B cell (primary cell): ENCODE measurements at regions of chr5 and their contacts with region 1.

Region 1: GRCh38 chr5:14142827-14143548 is at the start of gene TRIO:
- DNase-seq: peak; percentile 92
- ATAC-seq: peak; percentile 52
- H3K4me3 ChIP-seq: peak within 1 kb of the TSS; percentile 76 to 97 (median 93)
- H3K4me3 Mint-ChIP-seq: peak within 1 kb of the TSS; percentile 90
- H3K27ac ChIP-seq: peak within 1 kb of the TSS; percentile 92 to 95
- H3K27ac Mint-ChIP-seq: peak within 1 kb of the TSS; percentile 97
- H3K4me1 ChIP-seq: peaks cover 32 to 36% of the 10 kb centered on the region in 2 donors
- H3K4me1 Mint-ChIP-seq: peaks cover 33% of the 10 kb centered on the region
- H3K27me3 ChIP-seq: peaks cover 0 to 7% (median 1%) of the 10 kb centered on the region in 4 experiments
- H3K27me3 Mint-ChIP-seq: peaks cover 7% of the 10 kb centered on the region
- CTCF ChIP-seq: peak; percentile 75
- total RNA-seq, gene TRIO: 479 and 534 TPM in 2 replicates

Region 2: DNA sequence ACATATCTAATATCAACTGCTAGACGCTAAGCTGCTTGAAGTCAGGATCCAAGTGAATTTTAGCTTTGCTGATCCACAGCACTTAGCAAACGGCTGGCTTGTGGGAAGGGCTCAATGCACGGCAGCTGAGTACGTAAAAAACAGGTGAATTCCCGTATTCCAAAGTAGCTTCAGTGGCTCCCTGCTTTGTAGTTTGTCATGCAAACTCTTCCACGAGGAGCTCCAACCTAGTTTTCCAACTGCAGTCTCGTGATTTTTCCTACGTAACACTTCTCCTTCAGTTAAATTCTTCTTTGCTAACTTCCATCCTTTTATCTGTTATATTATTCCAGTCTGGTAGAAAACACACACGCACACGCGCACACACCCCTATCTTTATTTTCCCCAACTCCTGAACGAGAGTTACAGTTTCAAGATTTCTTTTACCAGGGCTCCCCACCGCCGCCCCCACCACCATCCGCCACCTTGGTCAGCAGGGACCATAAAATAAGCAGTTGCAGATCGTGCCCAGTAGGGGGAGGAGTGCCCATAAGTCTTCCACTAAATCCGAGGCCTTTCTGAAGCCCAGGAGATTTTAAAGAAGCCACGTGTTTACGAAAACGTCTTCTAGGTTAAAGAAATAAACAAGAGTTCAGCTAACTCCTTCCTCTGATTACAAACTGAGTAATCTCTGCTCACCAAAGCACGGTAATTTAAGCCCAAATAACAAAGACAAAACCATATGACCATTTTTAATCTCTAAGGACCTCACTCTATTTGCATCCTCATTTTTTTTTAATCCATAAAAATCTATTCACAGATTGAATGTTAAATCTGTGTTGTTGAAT is 34.6 kb before region 1 on chr5:
- CTCF ChIA-PET with region 1: interaction called, 11 read pairs
- POLR2A ChIA-PET with region 1: no interaction called
- intact Hi-C with region 1: loop called (anchors 2 kb)
- DNase-seq: peak; percentile 83
- ATAC-seq: peak; percentile 95
- H3K4me3 ChIP-seq: peak overlapping the region in 3 of 5 experiments; percentile 5 to 22 (median 17)
- H3K4me3 Mint-ChIP-seq: peak overlapping the region; percentile 77
- H3K27ac ChIP-seq: no peak overlapping the region
- H3K27ac Mint-ChIP-seq: peak overlapping the region; percentile 11
- H3K4me1 ChIP-seq: peaks cover 20 to 24% of the 10 kb centered on the region in 2 donors
- H3K4me1 Mint-ChIP-seq: peaks cover 39% of the 10 kb centered on the region
- H3K27me3 ChIP-seq: no peaks in the 10 kb centered on the region
- H3K27me3 Mint-ChIP-seq: no peaks in the 10 kb centered on the region
- CTCF ChIP-seq: peak; percentile 81

Region 3: GRCh38 chr5:14168144-14168792 is 25.3 kb after region 1 on chr5:
- CTCF ChIA-PET with region 1: interaction called, 4 read pairs
- POLR2A ChIA-PET with region 1: interaction called, 10 read pairs
- intact Hi-C with region 1: loop called (anchors 2 kb)
- DNase-seq: peak; percentile 67
- ATAC-seq: peak; percentile 62
- H3K4me3 ChIP-seq: peak overlapping the region; percentile 19 to 62 (median 54)
- H3K4me3 Mint-ChIP-seq: peak overlapping the region; percentile 85
- H3K27ac ChIP-seq: peak overlapping the region; percentile 65 to 83
- H3K27ac Mint-ChIP-seq: peak overlapping the region; percentile 90
- H3K4me1 ChIP-seq: peaks cover 64 to 65% of the 10 kb centered on the region in 2 donors
- H3K4me1 Mint-ChIP-seq: peaks cover 83% of the 10 kb centered on the region
- H3K27me3 ChIP-seq: no peaks in the 10 kb centered on the region
- H3K27me3 Mint-ChIP-seq: no peaks in the 10 kb centered on the region
- CTCF ChIP-seq: no peak

Region 4: DNA sequence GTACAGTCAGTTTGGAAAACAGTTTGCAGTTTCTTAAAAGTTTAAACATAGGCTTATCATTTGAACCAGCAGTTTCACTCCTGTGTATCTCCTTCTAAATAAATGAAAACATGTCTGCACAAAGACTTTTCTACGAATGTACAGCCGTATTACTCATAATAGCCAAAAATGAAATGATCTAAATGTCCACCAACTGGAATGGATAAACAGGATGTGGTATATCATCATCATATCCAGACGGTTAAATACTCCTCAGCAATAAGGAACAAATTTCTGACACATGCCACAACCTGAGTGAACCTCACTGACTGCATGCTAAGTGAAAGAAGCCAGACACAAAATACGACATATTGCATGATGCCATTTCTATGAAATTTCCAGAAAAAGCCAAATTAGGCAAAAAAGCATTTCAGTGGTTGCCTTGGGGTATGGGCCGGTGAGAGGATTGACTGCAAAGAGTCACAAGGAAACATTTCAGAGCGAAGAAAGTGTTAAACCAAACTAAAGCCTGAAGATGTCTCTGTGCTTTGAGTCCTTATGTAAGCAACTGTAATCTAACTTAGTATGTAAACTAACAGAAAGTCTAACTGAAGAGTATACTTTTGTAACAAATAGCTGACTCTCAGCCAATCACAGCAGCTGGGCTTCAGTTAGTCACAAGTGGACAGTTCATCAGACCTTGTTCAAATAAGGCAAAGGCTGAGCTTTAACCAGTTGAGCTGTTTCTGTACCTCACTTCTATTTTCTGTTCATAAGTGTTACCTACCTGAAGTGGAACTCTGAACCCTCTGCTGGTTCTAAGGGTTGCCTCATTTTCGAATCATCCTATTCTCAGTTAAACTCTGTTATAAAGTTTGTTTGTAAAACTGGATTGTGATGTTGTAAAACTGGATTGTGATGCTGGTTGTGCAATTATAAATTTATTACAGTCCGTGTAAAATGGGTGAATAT is 65.4 kb after region 1 on chr5:
- CTCF ChIA-PET with region 1: interaction called, 9 read pairs
- POLR2A ChIA-PET with region 1: interaction called, 12 read pairs
- intact Hi-C with region 1: loop called (anchors 1 kb)
- DNase-seq: peak; percentile 51
- ATAC-seq: peak; percentile 25
- H3K4me3 ChIP-seq: peak overlapping the region in 2 of 5 experiments; percentile 0 to 9
- H3K4me3 Mint-ChIP-seq: peak overlapping the region; percentile 74
- H3K27ac ChIP-seq: peak overlapping the region; percentile 80 to 94
- H3K27ac Mint-ChIP-seq: peak overlapping the region; percentile 93
- H3K4me1 ChIP-seq: peaks cover 84 to 88% of the 10 kb centered on the region in 2 donors
- H3K4me1 Mint-ChIP-seq: peaks cover 85% of the 10 kb centered on the region
- H3K27me3 ChIP-seq: no peaks in the 10 kb centered on the region
- H3K27me3 Mint-ChIP-seq: no peaks in the 10 kb centered on the region
- CTCF ChIP-seq: no peak

Region 5: DNA sequence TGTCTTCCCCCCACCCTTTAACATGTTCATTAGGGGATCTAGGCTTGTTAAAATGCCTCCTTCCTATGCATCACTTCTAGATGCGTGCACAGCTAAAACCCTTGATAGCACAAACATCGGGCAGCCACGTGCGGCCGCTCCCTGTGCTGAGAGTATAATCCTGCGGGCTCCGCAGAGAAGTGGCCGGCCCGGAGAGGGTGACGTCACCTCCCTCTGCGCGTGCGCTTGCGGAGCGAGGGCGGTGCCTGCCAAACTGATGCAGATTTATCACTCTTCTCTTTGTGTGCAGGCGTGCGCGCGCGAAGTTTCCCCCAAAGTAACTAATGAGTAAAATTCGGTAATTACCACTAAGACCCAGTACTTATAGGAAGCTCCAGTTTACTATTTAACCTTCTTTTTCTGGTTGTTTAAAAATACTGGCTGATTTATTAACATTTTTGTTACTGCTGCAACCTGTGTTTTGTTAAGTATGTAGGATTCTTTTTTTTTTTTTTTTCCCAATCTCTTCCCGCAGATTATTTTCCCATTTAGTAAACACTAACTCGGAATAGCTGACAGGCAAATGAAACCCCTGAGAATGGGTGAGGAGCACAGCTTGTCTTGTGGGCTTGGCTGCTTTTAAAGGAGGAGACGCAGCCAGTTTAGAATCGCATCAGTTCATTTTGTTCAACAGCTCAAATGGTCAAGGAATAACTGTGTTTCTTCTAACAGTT is 121.8 kb after region 1 on chr5:
- CTCF ChIA-PET with region 1: interaction called, 64 read pairs
- POLR2A ChIA-PET with region 1: interaction called, 8 read pairs
- intact Hi-C with region 1: loop called (anchors 1 kb)
- DNase-seq: peak; percentile 89
- ATAC-seq: peak; percentile 97
- H3K4me3 ChIP-seq: peak overlapping the region; percentile 5 to 60 (median 32)
- H3K4me3 Mint-ChIP-seq: peak overlapping the region; percentile 82
- H3K27ac ChIP-seq: peak overlapping the region in 1 of 2 donors; percentile 21
- H3K27ac Mint-ChIP-seq: peak overlapping the region; percentile 88
- H3K4me1 ChIP-seq: peaks cover 22 to 23% of the 10 kb centered on the region in 2 donors
- H3K4me1 Mint-ChIP-seq: peaks cover 74% of the 10 kb centered on the region
- H3K27me3 ChIP-seq: no peaks in the 10 kb centered on the region
- H3K27me3 Mint-ChIP-seq: no peaks in the 10 kb centered on the region
- CTCF ChIP-seq: no peak

Region 6: GRCh38 chr5:14331386-14331781 is 188.4 kb after region 1 on chr5:
- CTCF ChIA-PET with region 1: no interaction called
- POLR2A ChIA-PET with region 1: no interaction called
- intact Hi-C with region 1: loop called (anchors 5 kb)
- DNase-seq: peak; percentile 60
- ATAC-seq: peak; percentile 93
- H3K4me3 ChIP-seq: peak overlapping the region in 1 of 5 experiments; percentile 19
- H3K4me3 Mint-ChIP-seq: peak overlapping the region; percentile 73
- H3K27ac ChIP-seq: peak overlapping the region; percentile 50 to 55
- H3K27ac Mint-ChIP-seq: peak overlapping the region; percentile 66
- H3K4me1 ChIP-seq: peaks cover 49% of the 10 kb centered on the region in 2 donors
- H3K4me1 Mint-ChIP-seq: peaks cover 62% of the 10 kb centered on the region
- H3K27me3 ChIP-seq: no peaks in the 10 kb centered on the region
- H3K27me3 Mint-ChIP-seq: no peaks in the 10 kb centered on the region
- CTCF ChIP-seq: no peak

Region 7: DNA sequence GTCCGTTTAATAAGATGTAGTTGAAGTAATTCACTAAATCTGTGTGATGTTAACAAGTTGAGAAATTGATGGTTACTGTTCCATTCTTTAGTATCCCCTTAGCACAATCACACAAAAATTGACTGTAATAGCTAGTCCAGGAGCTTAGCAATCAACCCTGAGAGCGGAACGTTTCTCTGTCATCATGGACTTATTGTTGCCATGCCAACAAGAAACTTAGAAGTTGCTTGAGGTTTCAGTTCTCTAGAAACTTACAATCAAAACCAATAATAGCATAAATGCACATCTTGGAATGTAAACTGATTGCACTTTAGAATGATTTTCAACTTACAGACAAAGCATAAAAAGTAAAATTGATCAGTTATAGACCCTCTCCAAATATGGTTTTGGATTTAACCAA is 854.0 kb after region 1 on chr5:
- CTCF ChIA-PET with region 1: no interaction called
- POLR2A ChIA-PET with region 1: no interaction called
- intact Hi-C with region 1: loop called (anchors 10 kb)
- DNase-seq: peak; percentile 85
- ATAC-seq: peak; percentile 69
- H3K4me3 ChIP-seq: no peak overlapping the region
- H3K4me3 Mint-ChIP-seq: peak overlapping the region; percentile 24
- H3K27ac ChIP-seq: peak overlapping the region; percentile 37 to 59
- H3K27ac Mint-ChIP-seq: peak overlapping the region; percentile 71
- H3K4me1 ChIP-seq: peaks cover 35 to 39% of the 10 kb centered on the region in 2 donors
- H3K4me1 Mint-ChIP-seq: peaks cover 63% of the 10 kb centered on the region
- H3K27me3 ChIP-seq: no peaks in the 10 kb centered on the region
- H3K27me3 Mint-ChIP-seq: no peaks in the 10 kb centered on the region
- CTCF ChIP-seq: no peak